ENCODE measurements at regions of chr11 and their contacts with region 1.

Region 1: DNA sequence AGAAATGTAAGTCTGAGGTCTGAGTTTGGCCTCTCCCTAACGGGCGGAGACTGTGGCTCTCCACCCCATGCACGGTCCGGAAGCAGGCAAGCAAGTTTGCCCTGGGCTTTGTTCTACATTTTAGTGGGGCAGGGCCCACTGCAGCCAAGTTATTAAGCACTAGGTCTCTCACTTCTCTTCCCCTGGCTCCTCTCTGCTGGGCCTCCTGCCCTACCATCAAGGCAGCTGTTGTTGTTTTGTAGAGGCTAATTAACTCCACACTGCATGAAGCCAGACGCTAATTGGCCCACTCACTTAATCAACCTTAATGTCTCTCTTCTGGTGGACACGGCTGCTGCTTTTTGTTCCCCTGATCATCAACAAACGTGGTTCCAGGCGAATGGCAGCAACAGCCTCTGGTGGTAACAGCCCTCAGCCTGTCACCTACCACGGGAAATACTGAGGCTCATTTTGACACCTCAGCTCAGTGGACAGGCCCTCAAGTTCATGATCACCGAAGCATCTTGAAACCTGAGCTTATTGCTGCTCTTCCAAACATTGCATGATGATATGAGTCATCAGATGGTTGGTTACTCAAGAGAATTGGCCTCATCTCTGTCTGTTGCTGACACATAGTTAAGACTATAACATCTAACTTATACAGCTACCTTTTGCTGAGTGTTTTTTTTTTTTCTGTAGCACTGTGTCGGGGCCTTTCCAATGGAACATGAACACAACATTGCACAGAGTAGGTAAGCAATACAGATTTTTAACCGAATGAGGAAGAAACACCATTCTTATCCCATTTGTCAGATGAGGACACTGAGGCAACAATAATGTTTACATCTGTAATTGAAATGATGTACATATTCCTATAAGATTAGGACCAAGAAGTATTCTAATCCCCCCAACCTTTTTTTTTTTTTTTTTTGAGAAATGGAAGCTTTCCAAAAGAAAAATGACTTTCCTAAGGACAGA is 20.8 kb upstream of the LMO2 start:
- DNase-seq: peak; percentile 32
- ATAC-seq: peak; percentile 89
- H3K4me3 Mint-ChIP-seq: peak overlapping the region; percentile 59
- H3K27ac Mint-ChIP-seq: peak overlapping the region; percentile 90
- H3K4me1 Mint-ChIP-seq: peaks cover 19% of the 10 kb centered on the region
- H3K27me3 Mint-ChIP-seq: peaks cover 7% of the 10 kb centered on the region
- CTCF ChIP-seq: no peak

Region 2: DNA sequence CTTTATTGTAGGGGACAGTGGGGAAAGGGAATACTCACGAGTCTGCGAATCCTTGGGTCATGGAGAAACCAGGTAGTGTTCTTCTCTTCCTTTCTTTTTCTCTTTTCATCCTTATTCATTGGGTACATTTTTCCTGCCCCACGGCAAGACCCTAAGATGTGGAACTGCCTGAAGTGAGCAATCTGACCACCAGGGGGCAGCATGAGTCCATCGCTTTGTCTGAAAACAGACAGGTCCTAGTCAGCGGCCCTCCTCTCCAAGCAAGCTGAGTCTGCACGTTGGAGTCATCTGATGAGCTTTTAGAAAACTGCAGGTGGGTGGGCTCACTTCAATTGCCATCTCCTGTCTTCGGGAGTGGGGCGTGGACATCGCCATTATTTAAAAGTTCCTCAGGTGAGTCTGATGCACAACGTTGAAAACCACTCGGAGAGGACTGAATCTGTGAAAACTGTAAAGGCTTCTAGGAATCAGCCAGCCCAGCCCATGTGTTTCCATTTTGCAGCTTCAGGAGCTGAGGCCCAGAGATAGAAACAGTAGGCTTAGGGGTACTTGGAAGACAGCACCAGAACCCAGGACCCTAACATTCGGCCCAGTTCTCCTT is 104.4 kb before region 1 on chr11:
- CTCF ChIA-PET with region 1: no interaction called
- POLR2A ChIA-PET with region 1: no interaction called
- intact Hi-C with region 1: no loop called
- DNase-seq: peak; percentile 76
- ATAC-seq: peak; percentile 91
- H3K4me3 Mint-ChIP-seq: no peak overlapping the region
- H3K27ac Mint-ChIP-seq: no peak overlapping the region
- H3K4me1 Mint-ChIP-seq: no peaks in the 10 kb centered on the region
- H3K27me3 Mint-ChIP-seq: peaks cover 6% of the 10 kb centered on the region
- CTCF ChIP-seq: peak; percentile 95

Region 3: DNA sequence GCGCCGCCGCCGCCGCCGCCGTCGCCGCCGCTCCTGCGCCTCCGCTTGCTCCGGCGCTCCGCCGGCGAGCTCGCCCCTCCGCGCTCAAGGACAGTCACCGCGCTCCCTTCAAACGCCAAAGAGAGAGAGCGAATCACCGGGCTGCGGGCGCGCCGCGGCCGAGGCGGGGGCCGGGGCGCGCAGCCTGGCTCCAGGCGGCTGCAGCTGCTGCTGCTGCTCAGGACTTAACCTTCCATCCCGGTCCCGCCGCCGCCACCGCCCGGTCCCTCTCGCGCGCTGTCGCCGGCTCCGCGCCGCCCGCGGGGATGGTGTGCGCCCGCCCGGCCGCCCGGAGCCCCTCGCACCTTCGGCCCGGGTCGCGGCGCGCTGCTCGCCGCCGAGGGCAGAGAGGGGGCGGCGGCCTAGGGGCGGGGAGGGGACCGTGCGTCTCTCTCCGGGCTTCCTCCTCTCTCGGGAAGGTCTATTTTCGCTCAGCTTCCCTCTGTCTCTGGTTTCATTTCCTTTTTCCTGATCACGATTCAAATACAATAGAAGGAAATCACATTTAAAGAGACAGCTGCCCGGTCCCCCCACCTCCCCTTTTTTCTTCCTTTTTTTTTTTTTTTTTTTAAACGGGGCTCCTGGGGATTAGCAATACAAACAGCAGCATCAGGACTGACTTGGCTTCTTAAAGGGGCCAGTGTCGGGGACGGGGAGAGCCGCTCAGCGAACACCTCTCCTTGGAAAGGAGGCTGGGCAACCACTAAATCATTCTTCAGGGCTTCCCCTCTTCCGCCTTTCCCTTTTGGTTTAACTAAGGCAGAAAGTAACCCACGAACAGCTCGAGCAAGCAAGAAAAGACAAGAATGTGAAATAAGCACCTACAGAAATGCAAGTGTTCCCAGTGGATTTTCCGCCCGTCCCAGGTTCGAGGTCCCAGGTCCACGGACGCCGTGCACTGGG is 42.9 kb before region 1 on chr11:
- CTCF ChIA-PET with region 1: interaction called, 4 read pairs
- POLR2A ChIA-PET with region 1: interaction called, 10 read pairs
- intact Hi-C with region 1: loop called (anchors 2 kb)
- DNase-seq: peak; percentile 57
- ATAC-seq: peak; percentile 72
- H3K4me3 Mint-ChIP-seq: peak overlapping the region; percentile 92
- H3K27ac Mint-ChIP-seq: peak overlapping the region; percentile 74
- H3K4me1 Mint-ChIP-seq: peaks cover 36% of the 10 kb centered on the region
- H3K27me3 Mint-ChIP-seq: no peaks in the 10 kb centered on the region
- CTCF ChIP-seq: no peak

Region 4: DNA sequence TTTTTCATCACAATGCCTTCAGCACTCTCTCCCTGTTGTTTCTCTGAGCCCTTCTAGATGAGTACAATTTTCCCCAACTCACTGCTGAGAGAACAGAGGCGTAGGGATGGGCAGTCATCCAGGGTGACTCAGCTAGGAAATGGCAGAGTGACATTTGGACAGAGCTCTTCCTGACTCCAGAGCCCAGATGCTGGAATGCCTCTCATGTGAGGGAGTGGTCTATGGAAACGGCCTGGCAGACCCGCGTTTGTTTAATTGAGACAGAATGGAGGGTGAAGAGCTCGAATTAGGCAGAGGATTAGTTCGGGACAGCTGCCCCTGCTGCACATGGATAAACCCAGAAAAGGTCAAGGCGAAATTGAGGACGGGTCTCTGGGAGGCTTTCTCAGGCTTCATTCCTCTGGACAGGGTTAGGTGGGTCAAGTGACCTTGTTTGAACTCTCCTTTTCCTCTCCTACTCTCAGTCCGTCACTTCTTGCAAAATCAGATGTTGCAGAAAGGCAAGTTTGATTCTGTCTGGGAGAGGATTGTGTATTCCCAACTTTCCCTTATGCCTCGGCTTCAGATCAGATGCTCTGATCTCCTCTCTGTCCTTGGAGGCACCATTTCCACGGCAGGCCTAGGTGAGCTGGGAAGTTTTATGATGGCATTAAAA is 13.2 kb before region 1 on chr11:
- CTCF ChIA-PET with region 1: interaction called, 6 read pairs
- POLR2A ChIA-PET with region 1: interaction called, 10 read pairs
- intact Hi-C with region 1: loop called (anchors 1 kb)
- DNase-seq: no peak
- ATAC-seq: no peak
- H3K4me3 Mint-ChIP-seq: no peak overlapping the region
- H3K27ac Mint-ChIP-seq: peak overlapping the region; percentile 64
- H3K4me1 Mint-ChIP-seq: peaks cover 52% of the 10 kb centered on the region
- H3K27me3 Mint-ChIP-seq: no peaks in the 10 kb centered on the region
- CTCF ChIP-seq: no peak

Region 5: DNA sequence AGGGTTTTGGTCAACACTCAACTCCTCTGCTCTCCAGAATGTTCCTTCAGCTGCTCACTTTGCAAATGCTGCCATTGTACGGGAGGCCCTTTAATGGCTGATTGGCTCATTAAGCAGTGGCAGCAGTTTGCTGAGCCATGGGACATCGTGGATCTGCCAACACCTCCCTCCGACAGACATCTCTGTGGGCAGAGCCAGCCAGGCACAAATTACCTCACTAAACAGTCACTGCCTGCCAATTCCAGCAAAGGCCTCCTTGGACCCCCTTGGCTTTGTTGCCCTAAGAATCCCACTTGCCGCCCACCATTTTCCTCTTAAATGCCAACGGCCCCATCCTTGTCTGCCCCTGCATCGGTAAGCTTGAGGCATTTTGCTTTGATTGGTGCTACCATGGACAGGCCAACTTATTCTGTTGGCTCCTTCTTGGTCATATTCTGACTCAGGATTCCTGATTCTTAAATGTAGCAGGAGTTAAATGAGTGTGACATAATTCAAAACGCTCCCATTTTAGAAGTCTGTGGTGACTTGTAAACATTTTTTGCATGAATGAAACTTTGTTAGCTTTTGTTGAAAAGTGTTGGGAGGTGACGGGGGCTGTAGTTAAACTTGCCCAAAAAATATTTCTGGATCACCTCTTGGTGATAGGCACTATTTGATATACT is 36.7 kb after region 1 on chr11:
- CTCF ChIA-PET with region 1: no interaction called
- POLR2A ChIA-PET with region 1: no interaction called
- intact Hi-C with region 1: no loop called
- DNase-seq: no peak
- ATAC-seq: no peak
- H3K4me3 Mint-ChIP-seq: no peak overlapping the region
- H3K27ac Mint-ChIP-seq: no peak overlapping the region
- H3K4me1 Mint-ChIP-seq: no peaks in the 10 kb centered on the region
- H3K27me3 Mint-ChIP-seq: no peaks in the 10 kb centered on the region
- CTCF ChIP-seq: no peak

Measured in activated B cell treated with CpG ODN at 0.5 μM for 24 hours (primary cell).